CD14-positive monocyte (primary cell): ENCODE measurements at regions of chr9 and their contacts with region 1.

Region 1: GRCh38 chr9:32371279-32371678 is 13.2 kb upstream of the ACO1 start:
- DNase-seq: no peak
- H3K4me3 ChIP-seq: no peak overlapping the region
- H3K4me3 Mint-ChIP-seq: no peak overlapping the region
- H3K27ac ChIP-seq: no peak overlapping the region
- H3K27ac Mint-ChIP-seq: no peak overlapping the region
- H3K4me1 ChIP-seq: no peaks in the 10 kb centered on the region
- H3K4me1 Mint-ChIP-seq: no peaks in the 10 kb centered on the region
- H3K27me3 ChIP-seq: no peaks in the 10 kb centered on the region
- H3K27me3 Mint-ChIP-seq: peaks cover 0 to 2% (median 0%) of the 10 kb centered on the region in 3 donors
- CTCF ChIP-seq: no peak

Region 2: DNA sequence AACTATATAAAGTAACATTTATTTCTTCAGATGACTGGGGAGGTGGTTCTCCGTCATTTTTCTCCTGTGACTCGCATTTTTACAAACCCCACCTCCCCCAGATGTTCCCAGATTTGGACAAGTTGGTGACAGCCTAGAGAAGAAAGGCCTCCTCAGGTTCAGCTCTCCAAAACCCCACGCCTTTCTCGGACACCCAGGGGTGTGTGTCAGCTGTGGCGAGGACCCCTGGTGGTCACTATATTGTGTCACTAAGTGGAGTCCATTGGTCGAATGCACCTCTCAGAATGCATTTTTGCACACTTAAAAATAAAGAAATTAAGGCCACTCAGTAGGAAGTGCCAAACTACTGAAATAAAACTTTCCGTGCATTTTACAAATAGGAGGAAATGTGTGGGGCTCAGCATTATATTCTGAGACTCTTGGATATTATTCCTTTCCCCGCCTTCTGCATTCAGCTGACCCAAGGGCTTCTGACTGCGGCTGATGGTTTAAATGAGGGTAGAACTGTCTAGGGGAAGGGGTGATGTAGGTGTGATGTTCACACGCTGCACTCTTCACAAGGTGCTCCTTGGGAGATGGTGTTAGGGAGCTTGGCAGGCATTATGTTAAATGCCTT is 60.8 kb after region 1 on chr9:
- intact Hi-C with region 1: no loop called
- DNase-seq: peak; percentile 1 to 15 (median 3)
- H3K4me3 ChIP-seq: no peak overlapping the region
- H3K4me3 Mint-ChIP-seq: no peak overlapping the region
- H3K27ac ChIP-seq: no peak overlapping the region
- H3K27ac Mint-ChIP-seq: peak overlapping the region in 3 of 7 donors; percentile 4 to 5 (median 5)
- H3K4me1 ChIP-seq: no peaks in the 10 kb centered on the region
- H3K4me1 Mint-ChIP-seq: no peaks in the 10 kb centered on the region
- H3K27me3 ChIP-seq: no peaks in the 10 kb centered on the region
- H3K27me3 Mint-ChIP-seq: no peaks in the 10 kb centered on the region
- CTCF ChIP-seq: peak; percentile 44

Region 3: DNA sequence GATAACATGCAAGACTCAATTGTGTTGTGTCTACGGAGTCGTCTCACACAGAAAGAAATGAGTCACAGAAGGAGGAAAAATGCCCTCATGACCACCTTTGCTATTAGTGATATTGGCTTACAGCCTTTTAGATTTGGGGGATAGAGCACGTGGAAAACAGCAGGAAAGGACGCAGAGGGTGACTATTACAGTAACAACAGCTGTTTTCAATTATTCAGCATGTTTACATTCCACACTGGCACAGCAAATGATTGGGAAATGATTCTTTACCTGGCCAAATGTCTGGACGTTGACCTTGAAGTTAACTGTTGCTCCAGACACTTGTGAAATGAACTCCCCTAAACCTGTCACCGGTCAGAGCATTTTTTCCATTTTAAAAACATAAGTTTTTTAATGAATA is 583.4 kb after region 1 on chr9:
- intact Hi-C with region 1: loop called in 1 of 2 experiments (anchors 5 kb)
- DNase-seq: no peak
- H3K4me3 ChIP-seq: no peak overlapping the region
- H3K4me3 Mint-ChIP-seq: no peak overlapping the region
- H3K27ac ChIP-seq: no peak overlapping the region
- H3K27ac Mint-ChIP-seq: no peak overlapping the region
- H3K4me1 ChIP-seq: no peaks in the 10 kb centered on the region
- H3K4me1 Mint-ChIP-seq: no peaks in the 10 kb centered on the region
- H3K27me3 ChIP-seq: peaks cover 6 to 16% of the 10 kb centered on the region in 2 donors
- H3K27me3 Mint-ChIP-seq: peaks cover 11 to 35% (median 14%) of the 10 kb centered on the region in 3 donors
- CTCF ChIP-seq: no peak